ENCODE measurements at regions of chr22 and their contacts with region 1.

Region 1: DNA sequence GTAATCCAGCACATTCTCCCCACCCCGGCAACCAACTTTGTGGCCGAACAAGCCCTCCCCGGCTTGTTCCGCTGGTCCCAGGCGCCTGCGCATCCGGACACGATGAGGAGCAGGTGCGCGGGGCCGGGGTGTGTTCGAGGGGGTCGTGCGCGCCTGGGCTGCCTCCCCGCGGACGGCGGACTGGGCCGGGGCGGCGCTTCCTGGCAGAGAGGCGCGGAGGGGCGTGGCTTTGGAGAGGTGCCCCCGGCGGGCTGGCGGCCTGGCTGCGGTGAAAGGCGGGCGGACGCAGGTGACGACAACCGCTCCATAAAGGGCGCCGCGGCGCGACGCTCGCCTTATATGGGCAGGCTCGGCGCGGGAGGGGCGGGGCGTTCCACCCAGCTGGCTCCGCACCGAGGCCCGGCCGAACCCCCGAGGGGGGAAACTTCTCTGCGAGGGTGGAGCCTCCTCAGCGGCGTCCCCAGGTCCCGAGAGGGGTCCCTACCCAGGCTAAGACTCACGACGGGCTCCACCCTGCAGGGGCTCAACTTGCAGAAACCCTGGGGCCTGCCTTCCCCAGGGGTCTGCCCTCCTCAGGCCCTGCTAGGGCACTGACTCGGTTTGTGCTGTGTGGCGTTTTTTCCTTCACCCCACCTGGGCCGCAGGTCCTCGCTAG is 26.4 kb downstream of the TXN2 start:
- DNase-seq: peak; percentile 86 to 98 (median 96)
- ATAC-seq: peak; percentile 70
- H3K4me3 ChIP-seq: peak overlapping the region; percentile 76
- H3K4me3 Mint-ChIP-seq: peak overlapping the region; percentile 84
- H3K27ac ChIP-seq: peak overlapping the region; percentile 89 to 92
- H3K27ac Mint-ChIP-seq: peak overlapping the region; percentile 93
- H3K4me1 ChIP-seq: peaks cover 61% of the 10 kb centered on the region
- H3K4me1 Mint-ChIP-seq: peaks cover 46% of the 10 kb centered on the region
- H3K27me3 ChIP-seq: no peaks in the 10 kb centered on the region
- H3K27me3 Mint-ChIP-seq: no peaks in the 10 kb centered on the region
- CTCF ChIP-seq: no peak

Region 2: DNA sequence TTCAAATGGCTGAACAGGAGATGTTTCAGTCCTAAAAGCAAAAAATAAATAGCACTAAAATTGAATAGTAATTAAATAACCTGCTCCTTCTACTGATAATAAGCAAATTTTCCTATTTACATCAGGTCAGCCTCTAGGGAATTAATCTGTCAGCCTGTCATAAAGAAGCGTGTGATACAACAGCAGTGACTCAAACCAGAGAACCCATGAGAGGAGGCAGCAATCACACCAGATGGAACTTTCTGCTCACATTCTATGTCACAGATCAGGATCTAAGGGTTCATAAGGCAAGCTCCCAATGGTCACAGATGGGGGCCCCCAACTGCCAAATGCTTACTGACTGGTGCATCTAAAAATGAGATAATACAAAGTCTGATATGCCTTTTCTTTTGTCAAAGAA is 467.6 kb before region 1 on chr22:
- CTCF ChIA-PET with region 1: no interaction called
- POLR2A ChIA-PET with region 1: no interaction called
- intact Hi-C with region 1: no loop called
- DNase-seq: no peak
- ATAC-seq: no peak
- H3K4me3 ChIP-seq: no peak overlapping the region
- H3K4me3 Mint-ChIP-seq: no peak overlapping the region
- H3K27ac ChIP-seq: no peak overlapping the region
- H3K27ac Mint-ChIP-seq: no peak overlapping the region
- H3K4me1 ChIP-seq: no peaks in the 10 kb centered on the region
- H3K4me1 Mint-ChIP-seq: no peaks in the 10 kb centered on the region
- H3K27me3 ChIP-seq: peaks cover 0 to 4% of the 10 kb centered on the region in 2 experiments
- H3K27me3 Mint-ChIP-seq: peaks cover 12% of the 10 kb centered on the region
- CTCF ChIP-seq: no peak

Region 3: GRCh38 chr22:36365020-36365411 is 90.0 kb before region 1 on chr22:
- CTCF ChIA-PET with region 1: interaction called, 5 read pairs
- POLR2A ChIA-PET with region 1: interaction called, 12 read pairs
- intact Hi-C with region 1: loop called in 1 of 2 experiments (anchors 2 kb)
- DNase-seq: peak; percentile 73 to 96 (median 84)
- ATAC-seq: peak; percentile 90
- H3K4me3 ChIP-seq: no peak overlapping the region
- H3K4me3 Mint-ChIP-seq: peak overlapping the region; percentile 81
- H3K27ac ChIP-seq: peak overlapping the region; percentile 84 to 91
- H3K27ac Mint-ChIP-seq: peak overlapping the region; percentile 93
- H3K4me1 ChIP-seq: peaks cover 99% of the 10 kb centered on the region
- H3K4me1 Mint-ChIP-seq: peaks cover 96% of the 10 kb centered on the region
- H3K27me3 ChIP-seq: no peaks in the 10 kb centered on the region
- H3K27me3 Mint-ChIP-seq: no peaks in the 10 kb centered on the region
- CTCF ChIP-seq: no peak

Region 4: DNA sequence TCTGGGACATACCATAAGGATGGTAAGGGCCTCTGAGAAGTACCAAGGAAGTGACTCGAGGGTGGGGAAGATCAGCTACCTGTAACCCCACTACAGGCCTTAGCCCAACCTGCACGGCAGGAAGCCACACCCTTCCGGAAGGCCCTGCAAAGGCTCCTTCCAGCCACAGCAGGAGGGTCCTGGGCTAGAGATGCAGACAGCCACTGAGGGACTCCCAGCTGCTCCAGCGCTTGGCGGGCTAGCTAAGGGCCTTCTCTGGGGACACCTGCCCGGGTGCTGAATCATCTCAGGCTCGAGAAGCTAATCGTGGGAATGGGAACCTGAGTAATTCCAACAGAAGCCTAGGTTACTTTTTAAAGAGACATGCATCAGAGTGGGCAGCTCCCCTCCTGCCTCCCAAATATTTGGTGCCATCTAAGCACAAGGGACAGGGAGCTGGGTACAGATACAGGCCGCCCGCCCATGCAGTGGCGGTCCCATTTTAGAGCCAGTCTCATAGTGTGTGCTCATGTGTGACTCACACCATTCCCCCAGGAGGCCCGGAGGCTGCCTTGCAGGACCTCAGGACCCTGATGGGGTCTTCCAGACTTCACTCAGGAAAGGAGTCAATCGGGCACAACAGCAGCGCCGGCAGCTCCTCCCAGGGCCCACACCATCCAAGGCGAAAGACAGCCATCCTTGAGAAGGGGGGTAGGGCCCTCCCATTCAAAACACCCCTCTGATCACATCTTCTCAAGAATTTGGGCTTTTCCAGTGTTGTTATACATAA is 75.3 kb before region 1 on chr22:
- CTCF ChIA-PET with region 1: interaction called, 4 read pairs
- POLR2A ChIA-PET with region 1: interaction called, 29 read pairs
- intact Hi-C with region 1: loop called in 1 of 2 experiments (anchors 2 kb)
- DNase-seq: peak in 12 of 14 experiments; percentile 38 to 89 (median 63)
- ATAC-seq: peak; percentile 37
- H3K4me3 ChIP-seq: peak overlapping the region; percentile 31
- H3K4me3 Mint-ChIP-seq: peak overlapping the region; percentile 70
- H3K27ac ChIP-seq: peak overlapping the region; percentile 85 to 95
- H3K27ac Mint-ChIP-seq: peak overlapping the region; percentile 93
- H3K4me1 ChIP-seq: peaks cover 98% of the 10 kb centered on the region
- H3K4me1 Mint-ChIP-seq: peaks cover 85% of the 10 kb centered on the region
- H3K27me3 ChIP-seq: no peaks in the 10 kb centered on the region
- H3K27me3 Mint-ChIP-seq: no peaks in the 10 kb centered on the region
- CTCF ChIP-seq: no peak

Region 5: GRCh38 chr22:36439481-36440271 is 15.4 kb before region 1 on chr22:
- CTCF ChIA-PET with region 1: interaction called, 9 read pairs
- POLR2A ChIA-PET with region 1: interaction called, 9 read pairs
- intact Hi-C with region 1: loop called in 1 of 2 experiments (anchors 1 kb)
- DNase-seq: peak in 2 of 14 experiments; percentile 26 to 35
- ATAC-seq: no peak
- H3K4me3 ChIP-seq: no peak overlapping the region
- H3K4me3 Mint-ChIP-seq: no peak overlapping the region
- H3K27ac ChIP-seq: no peak overlapping the region
- H3K27ac Mint-ChIP-seq: no peak overlapping the region
- H3K4me1 ChIP-seq: peaks cover 36% of the 10 kb centered on the region
- H3K4me1 Mint-ChIP-seq: peaks cover 39% of the 10 kb centered on the region
- H3K27me3 ChIP-seq: no peaks in the 10 kb centered on the region
- H3K27me3 Mint-ChIP-seq: no peaks in the 10 kb centered on the region
- CTCF ChIP-seq: no peak

Region 6: DNA sequence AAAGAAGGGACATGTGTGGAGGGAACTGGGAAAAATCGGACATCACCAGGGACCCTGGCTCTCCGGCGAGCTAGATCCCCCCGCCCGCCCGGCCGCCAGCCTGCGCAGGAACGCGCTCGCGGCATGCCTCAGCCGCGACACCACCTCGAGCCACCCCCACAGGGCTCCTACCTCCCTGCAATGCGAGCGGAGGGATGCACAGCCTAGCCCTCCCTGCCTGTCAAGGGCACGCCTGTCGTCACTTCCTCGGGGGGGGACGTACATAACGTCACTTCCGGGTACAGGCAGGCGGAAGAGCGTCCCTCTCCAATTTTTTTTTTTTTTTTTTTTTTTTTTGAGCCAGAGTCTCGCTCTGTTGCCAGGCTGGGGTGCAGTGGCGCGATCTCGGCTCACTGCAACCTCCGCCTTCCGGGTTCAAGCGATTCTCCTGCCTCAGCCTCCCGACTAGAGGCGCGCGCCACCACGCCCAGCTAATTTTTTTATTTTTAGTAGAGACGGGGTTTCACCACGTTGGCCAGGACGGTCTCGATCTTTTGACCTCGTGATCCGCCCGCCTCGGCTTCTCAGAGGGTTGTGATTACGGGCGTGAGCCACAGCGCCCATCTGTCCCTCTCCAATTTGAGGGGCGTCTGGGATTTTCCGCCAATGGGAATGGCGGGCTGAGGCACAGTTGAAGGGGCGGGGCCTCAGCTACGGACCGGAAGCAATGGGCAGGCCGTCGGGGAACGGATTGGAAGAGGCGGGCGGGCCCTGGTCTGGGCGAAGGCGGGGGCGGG is 26.5 kb after region 1 on chr22 and contains the start of gene TXN2:
- CTCF ChIA-PET with region 1: no interaction called
- POLR2A ChIA-PET with region 1: interaction called, 11 read pairs
- intact Hi-C with region 1: loop called in 1 of 2 experiments (anchors 1 kb)
- DNase-seq: peak; percentile 92 to 98 (median 96)
- ATAC-seq: peak; percentile 87
- H3K4me3 ChIP-seq: peak within 1 kb of the TSS; percentile 67
- H3K4me3 Mint-ChIP-seq: peak within 1 kb of the TSS; percentile 95
- H3K27ac ChIP-seq: peak within 1 kb of the TSS; percentile 94 to 99
- H3K27ac Mint-ChIP-seq: peak within 1 kb of the TSS; percentile 92
- H3K4me1 ChIP-seq: peaks cover 22% of the 10 kb centered on the region
- H3K4me1 Mint-ChIP-seq: peaks cover 22% of the 10 kb centered on the region
- H3K27me3 ChIP-seq: no peaks in the 10 kb centered on the region
- H3K27me3 Mint-ChIP-seq: no peaks in the 10 kb centered on the region
- CTCF ChIP-seq: no peak
- total RNA-seq, gene TXN2: 26.4 to 26.5 TPM

Region 7: DNA sequence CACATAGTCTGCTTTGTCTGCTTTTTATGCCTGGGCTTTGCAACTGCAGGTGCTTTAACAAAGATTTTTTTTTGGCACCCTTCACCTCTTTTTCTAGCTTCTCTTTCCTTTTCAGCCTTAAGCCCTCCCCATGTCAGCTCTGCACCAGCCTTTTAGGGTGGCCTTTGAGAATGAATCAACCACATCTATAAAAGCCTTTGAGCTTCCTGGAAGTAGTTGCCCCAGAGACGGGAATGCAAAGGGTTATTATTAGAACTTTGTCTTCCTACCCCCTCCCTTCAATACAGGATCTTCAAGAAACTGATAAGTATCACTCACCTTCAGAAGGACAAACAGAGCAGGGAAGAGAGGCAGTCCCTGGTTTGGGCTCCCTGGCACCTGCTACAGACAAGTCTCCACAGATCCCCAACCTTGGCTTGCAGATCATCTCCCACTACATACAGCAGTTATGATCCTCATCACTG is 353.8 kb after region 1 on chr22:
- CTCF ChIA-PET with region 1: no interaction called
- POLR2A ChIA-PET with region 1: no interaction called
- intact Hi-C with region 1: no loop called
- DNase-seq: no peak
- ATAC-seq: peak; percentile 24
- H3K4me3 ChIP-seq: no peak overlapping the region
- H3K4me3 Mint-ChIP-seq: no peak overlapping the region
- H3K27ac ChIP-seq: no peak overlapping the region
- H3K27ac Mint-ChIP-seq: peak overlapping the region; percentile 15
- H3K4me1 ChIP-seq: peaks cover 18% of the 10 kb centered on the region
- H3K4me1 Mint-ChIP-seq: peaks cover 28% of the 10 kb centered on the region
- H3K27me3 ChIP-seq: peaks cover 0 to 4% of the 10 kb centered on the region in 2 experiments
- H3K27me3 Mint-ChIP-seq: peaks cover 14% of the 10 kb centered on the region
- CTCF ChIP-seq: no peak

Measured in CD4-positive, alpha-beta T cell (primary cell).